IMR-90 (cell line): ENCODE measurements at regions of chr3 and their contacts with region 1.

Region 1: DNA sequence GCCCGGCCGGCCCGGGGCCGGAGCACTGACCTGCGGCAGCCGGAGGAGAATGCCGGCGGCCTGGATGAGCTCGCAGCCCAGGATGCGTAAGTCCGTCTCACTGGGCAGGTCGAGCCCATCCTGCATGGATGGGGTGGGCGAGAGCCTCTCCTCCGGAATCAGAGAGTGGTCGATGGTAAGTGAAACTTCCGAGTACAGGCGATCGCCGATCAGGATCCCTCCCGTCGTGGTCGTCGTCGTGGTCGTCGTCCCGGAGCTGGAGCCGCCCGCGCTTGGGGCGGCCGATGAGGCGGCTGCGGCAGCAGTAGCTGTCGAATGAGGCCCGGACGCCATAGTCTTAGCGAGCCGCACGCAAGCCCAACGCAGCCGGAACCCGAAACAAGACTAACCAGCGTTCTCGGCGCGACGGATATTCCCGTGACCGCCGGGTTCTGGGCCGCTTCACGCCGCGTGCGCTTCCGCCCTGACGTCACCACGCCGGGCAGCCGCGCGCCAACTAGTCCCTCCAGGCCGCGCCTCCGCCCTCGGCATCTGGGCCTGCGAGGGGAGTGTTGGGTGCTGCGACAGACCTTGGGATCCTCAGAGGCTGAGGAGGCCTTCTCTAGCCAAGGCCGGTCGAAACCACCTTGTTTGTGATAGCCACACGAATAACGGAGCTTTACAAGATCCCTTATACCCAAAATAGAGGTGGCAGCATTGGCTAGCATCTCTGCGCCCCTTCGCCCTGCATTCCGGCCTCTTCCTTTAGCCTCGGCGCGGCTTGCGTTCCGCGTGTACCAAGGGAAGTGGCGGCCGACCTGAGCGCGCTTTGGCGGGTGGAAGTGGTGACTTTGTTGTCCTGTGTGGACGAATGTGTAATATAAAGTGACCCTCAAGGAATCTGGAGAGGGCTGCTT is at the start of gene CCNL1:
- DNase-seq: peak; percentile 98
- ATAC-seq: peak; percentile 90
- H3K4me3 ChIP-seq: peak within 1 kb of the TSS; percentile 94
- H3K27ac ChIP-seq: peak within 1 kb of the TSS; percentile 98
- H3K4me1 ChIP-seq: peaks cover 4% of the 10 kb centered on the region
- H3K27me3 ChIP-seq: no peaks in the 10 kb centered on the region
- CTCF ChIP-seq: no peak
- POLR2A ChIP-seq: peak; percentile 99
- RAD21 ChIP-seq: peak; percentile 11; the same call in 1 of the 2 replicates
- total RNA-seq, gene CCNL1: 60.9 and 156 TPM in 2 replicates

Region 2: DNA sequence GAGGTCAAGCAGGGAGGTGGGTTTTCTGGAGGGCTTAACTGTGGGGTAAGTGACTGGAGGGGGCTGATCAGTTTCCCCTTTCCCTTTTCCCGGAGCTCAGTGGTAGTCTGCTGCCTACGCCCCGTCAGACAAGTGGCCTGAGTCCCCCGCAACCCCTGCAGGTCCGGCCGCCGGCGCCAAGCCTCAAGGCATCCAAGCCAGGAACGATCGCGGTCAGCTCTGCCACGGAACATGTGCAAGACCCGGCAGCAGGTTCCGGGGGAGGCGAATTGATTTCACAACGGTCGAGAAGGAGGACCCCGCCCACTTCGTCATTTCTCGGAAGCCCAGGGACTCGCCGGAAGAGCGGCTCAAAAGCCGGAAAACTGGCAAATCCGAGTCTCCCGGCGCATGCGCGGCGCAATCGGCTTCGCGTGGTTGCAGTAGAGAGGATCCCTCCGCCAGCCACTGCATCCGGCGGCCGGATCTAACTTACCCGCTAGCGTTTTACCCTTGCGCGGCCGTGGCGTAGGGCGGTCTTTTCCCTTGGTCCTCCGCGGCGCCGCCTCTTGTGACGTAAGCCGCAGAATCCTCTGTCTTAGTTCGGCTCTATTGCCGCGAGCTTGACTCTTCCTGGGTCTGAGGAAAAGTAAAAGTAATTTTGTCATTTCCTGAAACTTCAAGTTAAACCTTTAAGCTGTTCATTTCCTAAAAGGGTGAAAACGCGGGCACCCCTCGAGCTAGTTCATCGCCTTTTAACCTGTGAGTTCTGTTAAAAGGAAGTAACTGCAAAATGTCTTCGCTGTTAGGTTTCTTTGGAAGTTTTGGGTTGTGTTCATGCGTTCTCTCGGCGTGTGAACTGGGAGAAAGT is 14.9 kb after region 1 on chr3:
- CTCF ChIA-PET with region 1: interaction called, 4 read pairs
- POLR2A ChIA-PET with region 1: interaction called, 46 read pairs
- dilution Hi-C with region 1: no loop called
- in situ Hi-C with region 1: no loop called
- intact Hi-C with region 1: loop called (anchors 1 kb)
- DNase-seq: peak; percentile 100
- ATAC-seq: peak; percentile 94
- H3K4me3 ChIP-seq: peak overlapping the region; percentile 60
- H3K27ac ChIP-seq: peak overlapping the region; percentile 83
- H3K4me1 ChIP-seq: no peaks in the 10 kb centered on the region; the same call in none of the 2 replicates
- H3K27me3 ChIP-seq: no peaks in the 10 kb centered on the region
- CTCF ChIP-seq: no peak
- POLR2A ChIP-seq: peak; percentile 95
- RAD21 ChIP-seq: no peak; the same call in 1 of the 2 replicates

Region 3: DNA sequence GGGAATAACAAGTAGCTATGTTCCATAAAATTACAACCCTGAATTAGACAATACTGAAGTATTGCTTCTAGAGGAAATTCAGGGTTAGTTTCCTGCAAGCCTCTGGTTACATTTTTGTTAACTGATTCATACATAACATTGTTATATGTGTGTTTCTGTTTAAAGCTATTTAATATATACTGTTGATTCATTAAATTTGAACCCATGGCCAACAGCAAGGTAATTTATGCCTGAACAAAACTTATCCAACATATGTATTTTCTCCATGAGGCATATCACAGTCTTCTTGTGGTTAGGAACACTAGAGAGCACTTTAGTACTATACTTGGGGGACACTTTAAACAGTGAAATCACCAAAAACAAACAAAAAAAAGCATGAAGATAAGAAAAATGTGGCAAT is 229.0 kb after region 1 on chr3:
- CTCF ChIA-PET with region 1: no interaction called
- POLR2A ChIA-PET with region 1: no interaction called
- dilution Hi-C with region 1: no loop called
- in situ Hi-C with region 1: no loop called
- intact Hi-C with region 1: no loop called
- DNase-seq: peak; percentile 76
- ATAC-seq: peak; percentile 79
- H3K4me3 ChIP-seq: no peak overlapping the region
- H3K27ac ChIP-seq: no peak overlapping the region
- H3K4me1 ChIP-seq: peaks cover 11% of the 10 kb centered on the region
- H3K27me3 ChIP-seq: no peaks in the 10 kb centered on the region
- CTCF ChIP-seq: no peak
- POLR2A ChIP-seq: no peak
- RAD21 ChIP-seq: no peak

Region 4: DNA sequence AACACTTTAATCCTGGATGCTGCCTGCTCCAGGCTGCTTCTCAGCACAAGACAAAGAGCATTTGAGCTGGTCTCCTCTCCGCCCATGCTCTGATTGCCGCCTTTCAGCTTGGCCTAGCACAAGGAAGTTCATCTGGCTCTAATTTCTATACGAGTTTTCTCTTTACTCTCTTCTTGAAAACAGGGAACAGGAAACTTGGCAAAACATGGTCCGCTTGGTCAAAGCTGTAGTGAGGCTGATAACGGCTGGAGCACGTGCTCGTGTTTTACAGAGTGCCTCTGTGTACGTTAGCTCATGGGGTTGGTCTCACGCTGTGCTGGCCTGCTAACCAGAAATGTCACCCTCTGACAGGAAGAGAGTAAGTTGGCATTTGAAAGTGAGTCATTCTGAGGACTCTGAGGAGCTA is 1553.1 kb after region 1 on chr3:
- CTCF ChIA-PET with region 1: no interaction called
- POLR2A ChIA-PET with region 1: no interaction called
- dilution Hi-C with region 1: no loop called
- in situ Hi-C with region 1: loop called (anchors 25 kb)
- intact Hi-C with region 1: no loop called
- DNase-seq: no peak
- ATAC-seq: no peak
- H3K4me3 ChIP-seq: no peak overlapping the region
- H3K27ac ChIP-seq: peak overlapping the region; percentile 44
- H3K4me1 ChIP-seq: peaks cover 30% of the 10 kb centered on the region
- H3K27me3 ChIP-seq: no peaks in the 10 kb centered on the region
- CTCF ChIP-seq: no peak
- POLR2A ChIP-seq: no peak
- RAD21 ChIP-seq: no peak